ENCODE measurements at regions of chr1 and their contacts with region 1.

Region 1: GRCh38 chr1:27136998-27137542 is 17.9 kb downstream of the SLC9A1 start:
- DNase-seq: peak; percentile 95
- H3K4me3 Mint-ChIP-seq: peak overlapping the region; percentile 80
- H3K27ac Mint-ChIP-seq: peak overlapping the region; percentile 99
- H3K4me1 Mint-ChIP-seq: peaks cover 52% of the 10 kb centered on the region
- H3K27me3 Mint-ChIP-seq: no peaks in the 10 kb centered on the region

Region 2: GRCh38 chr1:27154991-27155781 is 18.1 kb after region 1 on chr1 and contains the start of gene SLC9A1:
- CTCF ChIA-PET with region 1: interaction called, 9 read pairs
- intact Hi-C with region 1: loop called (anchors 1 kb)
- DNase-seq: peak; percentile 91
- H3K4me3 Mint-ChIP-seq: peak within 1 kb of the TSS; percentile 89
- H3K27ac Mint-ChIP-seq: peak within 1 kb of the TSS; percentile 98
- H3K4me1 Mint-ChIP-seq: peaks cover 47% of the 10 kb centered on the region
- H3K27me3 Mint-ChIP-seq: no peaks in the 10 kb centered on the region
- total RNA-seq, gene SLC9A1: 15.4 to 16.5 TPM